ENCODE measurements at regions of chr12 and their contacts with region 1.

Region 1: DNA sequence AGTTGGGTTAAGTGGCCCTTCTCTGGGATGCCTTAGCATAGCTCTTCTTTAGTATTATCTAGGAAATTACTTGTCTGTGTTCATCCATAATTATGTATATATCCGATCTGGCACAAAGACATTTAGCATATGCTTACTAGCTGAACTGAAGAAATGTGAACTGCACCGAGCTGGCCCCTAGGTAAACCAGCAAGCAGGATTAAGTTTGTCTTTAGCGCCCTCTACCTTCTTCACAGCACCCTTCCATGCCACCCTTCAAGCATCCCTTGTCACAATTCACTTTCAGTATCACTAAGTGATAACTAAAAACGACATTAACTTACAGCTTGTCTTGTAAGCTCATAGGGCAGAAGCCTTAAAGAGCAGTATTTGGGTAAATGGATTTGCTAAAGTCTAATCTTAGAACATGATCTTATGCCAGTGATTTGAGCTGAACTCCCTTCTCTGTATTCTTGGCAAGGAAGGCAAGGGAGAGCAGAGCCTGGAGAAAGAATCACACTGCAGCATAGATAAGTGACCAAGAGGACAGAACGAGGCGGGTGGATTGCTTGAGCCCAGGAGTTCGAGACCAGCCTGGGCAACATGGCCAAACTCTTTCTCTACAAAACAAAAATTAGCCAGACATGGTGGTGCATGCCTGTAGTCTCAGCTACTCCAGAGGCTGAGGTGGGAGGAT is 2.6 kb upstream of the HAL start:
- DNase-seq: peak; percentile 73
- ATAC-seq: peak; percentile 93
- H3K4me3 ChIP-seq: no peak overlapping the region
- H3K4me3 Mint-ChIP-seq: no peak overlapping the region
- H3K27ac ChIP-seq: peak overlapping the region; percentile 6 to 17
- H3K27ac Mint-ChIP-seq: peak overlapping the region; percentile 35
- H3K4me1 ChIP-seq: peaks cover 0 to 5% of the 10 kb centered on the region in 2 donors
- H3K4me1 Mint-ChIP-seq: peaks cover 8% of the 10 kb centered on the region
- H3K27me3 ChIP-seq: no peaks in the 10 kb centered on the region
- H3K27me3 Mint-ChIP-seq: no peaks in the 10 kb centered on the region
- CTCF ChIP-seq: peak; percentile 71

Region 2: DNA sequence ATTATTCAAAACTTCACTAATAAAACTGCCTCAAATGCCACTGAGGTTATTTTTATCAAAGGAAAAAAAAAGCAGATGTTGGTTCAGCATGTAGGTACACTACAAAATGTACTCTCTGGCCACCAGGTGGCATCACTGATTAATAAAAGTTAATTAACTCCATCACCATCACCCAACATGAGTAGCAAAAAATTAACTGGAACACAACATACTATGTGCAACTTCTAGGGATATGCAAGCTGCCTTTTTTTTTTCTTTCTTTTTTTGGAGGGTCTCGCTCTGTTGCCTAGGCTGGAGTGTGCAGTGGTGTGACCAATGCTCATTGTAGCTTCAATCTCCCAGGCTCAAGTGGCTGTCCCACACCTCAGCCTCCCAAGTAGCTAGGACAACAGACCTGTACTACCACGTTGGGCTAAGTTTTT is 881.6 kb before region 1 on chr12:
- CTCF ChIA-PET with region 1: no interaction called
- POLR2A ChIA-PET with region 1: no interaction called
- intact Hi-C with region 1: loop called (anchors 5 kb)
- DNase-seq: peak; percentile 79
- ATAC-seq: peak; percentile 76
- H3K4me3 ChIP-seq: no peak overlapping the region
- H3K4me3 Mint-ChIP-seq: no peak overlapping the region
- H3K27ac ChIP-seq: no peak overlapping the region
- H3K27ac Mint-ChIP-seq: no peak overlapping the region
- H3K4me1 ChIP-seq: no peaks in the 10 kb centered on the region
- H3K4me1 Mint-ChIP-seq: no peaks in the 10 kb centered on the region
- H3K27me3 ChIP-seq: no peaks in the 10 kb centered on the region
- H3K27me3 Mint-ChIP-seq: no peaks in the 10 kb centered on the region
- CTCF ChIP-seq: peak; percentile 81

Region 3: GRCh38 chr12:95851606-95852005 is 147.1 kb before region 1 on chr12:
- CTCF ChIA-PET with region 1: no interaction called
- POLR2A ChIA-PET with region 1: no interaction called
- intact Hi-C with region 1: no loop called
- DNase-seq: no peak
- ATAC-seq: no peak
- H3K4me3 ChIP-seq: no peak overlapping the region
- H3K4me3 Mint-ChIP-seq: no peak overlapping the region
- H3K27ac ChIP-seq: no peak overlapping the region
- H3K27ac Mint-ChIP-seq: no peak overlapping the region
- H3K4me1 ChIP-seq: no peaks in the 10 kb centered on the region
- H3K4me1 Mint-ChIP-seq: no peaks in the 10 kb centered on the region
- H3K27me3 ChIP-seq: peaks cover 0 to 11% (median 9%) of the 10 kb centered on the region in 4 experiments
- H3K27me3 Mint-ChIP-seq: peaks cover 20% of the 10 kb centered on the region
- CTCF ChIP-seq: no peak

Region 4: GRCh38 chr12:95918194-95918993 is 80.4 kb before region 1 on chr12:
- CTCF ChIA-PET with region 1: interaction called, 112 read pairs
- POLR2A ChIA-PET with region 1: interaction called, 4 read pairs
- intact Hi-C with region 1: loop called (anchors 1 kb)
- DNase-seq: peak; percentile 70
- ATAC-seq: peak; percentile 90
- H3K4me3 ChIP-seq: no peak overlapping the region
- H3K4me3 Mint-ChIP-seq: no peak overlapping the region
- H3K27ac ChIP-seq: no peak overlapping the region
- H3K27ac Mint-ChIP-seq: no peak overlapping the region
- H3K4me1 ChIP-seq: peaks cover 4% of the 10 kb centered on the region in 2 donors
- H3K4me1 Mint-ChIP-seq: no peaks in the 10 kb centered on the region
- H3K27me3 ChIP-seq: peaks cover 0 to 2% (median 0%) of the 10 kb centered on the region in 4 experiments
- H3K27me3 Mint-ChIP-seq: peaks cover 3% of the 10 kb centered on the region
- CTCF ChIP-seq: peak; percentile 88

Region 5: DNA sequence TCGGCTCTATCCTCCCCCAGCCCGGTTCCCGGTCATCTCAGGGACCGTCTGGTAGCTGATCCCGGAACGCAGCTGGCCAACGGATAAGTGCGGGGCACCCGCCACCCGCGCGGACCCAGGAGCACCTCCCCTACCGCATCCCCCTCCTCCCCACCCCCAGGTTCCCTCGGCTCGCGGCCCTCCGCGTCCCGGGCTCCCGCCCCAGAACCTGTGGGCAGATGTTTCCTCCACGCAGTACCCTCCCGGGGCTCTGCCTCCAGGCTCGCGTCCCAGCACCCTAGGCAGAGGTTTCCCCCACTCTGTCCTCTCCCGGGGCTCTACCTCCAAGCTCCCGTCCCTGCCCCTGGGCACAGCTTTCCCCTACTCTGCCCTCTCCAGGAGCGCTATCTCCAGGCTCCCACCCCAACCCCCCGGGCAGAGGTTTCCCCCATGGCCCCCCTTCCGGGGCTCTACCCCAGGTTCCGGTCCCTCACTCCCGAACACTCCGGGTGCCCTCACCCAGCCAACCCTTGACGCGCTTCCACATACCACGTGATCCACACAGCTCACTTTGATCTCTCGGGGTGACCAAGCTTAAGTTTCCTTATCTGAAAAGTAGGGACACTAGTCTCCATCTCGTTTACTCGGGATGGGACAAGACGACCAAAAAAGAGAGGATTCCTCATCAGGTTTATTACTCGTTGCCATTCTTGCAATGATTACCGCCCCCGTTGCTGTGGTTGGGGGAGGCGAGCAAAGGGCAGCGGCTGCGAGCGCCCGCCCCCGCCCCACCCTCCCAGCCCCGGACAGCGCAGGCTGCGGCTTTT is 56.0 kb before region 1 on chr12 and contains the start of gene CCDC38:
- CTCF ChIA-PET with region 1: interaction called, 15 read pairs
- POLR2A ChIA-PET with region 1: no interaction called
- intact Hi-C with region 1: loop called (anchors 2 kb)
- DNase-seq: peak; percentile 85
- ATAC-seq: peak; percentile 88
- H3K4me3 ChIP-seq: peak within 1 kb of the TSS; percentile 68 to 94 (median 89)
- H3K4me3 Mint-ChIP-seq: peak within 1 kb of the TSS; percentile 98
- H3K27ac ChIP-seq: peak within 1 kb of the TSS; percentile 71 to 87
- H3K27ac Mint-ChIP-seq: peak within 1 kb of the TSS; percentile 92
- H3K4me1 ChIP-seq: peaks cover 9 to 11% of the 10 kb centered on the region in 2 donors
- H3K4me1 Mint-ChIP-seq: peaks cover 10% of the 10 kb centered on the region
- H3K27me3 ChIP-seq: no peaks in the 10 kb centered on the region
- H3K27me3 Mint-ChIP-seq: no peaks in the 10 kb centered on the region
- CTCF ChIP-seq: no peak
- total RNA-seq, gene CCDC38: 1.00 and 1.3 TPM in 2 replicates

Region 6: GRCh38 chr12:96020314-96021003 is 21.7 kb after region 1 on chr12:
- CTCF ChIA-PET with region 1: interaction called, 8 read pairs
- POLR2A ChIA-PET with region 1: interaction called, 4 read pairs
- intact Hi-C with region 1: loop called (anchors 2 kb)
- DNase-seq: peak; percentile 77
- ATAC-seq: peak; percentile 95
- H3K4me3 ChIP-seq: peak overlapping the region in 4 of 5 experiments; percentile 6 to 28 (median 20)
- H3K4me3 Mint-ChIP-seq: peak overlapping the region; percentile 62
- H3K27ac ChIP-seq: peak overlapping the region; percentile 62 to 79
- H3K27ac Mint-ChIP-seq: peak overlapping the region; percentile 89
- H3K4me1 ChIP-seq: peaks cover 28 to 34% of the 10 kb centered on the region in 2 donors
- H3K4me1 Mint-ChIP-seq: peaks cover 30% of the 10 kb centered on the region
- H3K27me3 ChIP-seq: no peaks in the 10 kb centered on the region
- H3K27me3 Mint-ChIP-seq: no peaks in the 10 kb centered on the region
- CTCF ChIP-seq: no peak

Region 7: DNA sequence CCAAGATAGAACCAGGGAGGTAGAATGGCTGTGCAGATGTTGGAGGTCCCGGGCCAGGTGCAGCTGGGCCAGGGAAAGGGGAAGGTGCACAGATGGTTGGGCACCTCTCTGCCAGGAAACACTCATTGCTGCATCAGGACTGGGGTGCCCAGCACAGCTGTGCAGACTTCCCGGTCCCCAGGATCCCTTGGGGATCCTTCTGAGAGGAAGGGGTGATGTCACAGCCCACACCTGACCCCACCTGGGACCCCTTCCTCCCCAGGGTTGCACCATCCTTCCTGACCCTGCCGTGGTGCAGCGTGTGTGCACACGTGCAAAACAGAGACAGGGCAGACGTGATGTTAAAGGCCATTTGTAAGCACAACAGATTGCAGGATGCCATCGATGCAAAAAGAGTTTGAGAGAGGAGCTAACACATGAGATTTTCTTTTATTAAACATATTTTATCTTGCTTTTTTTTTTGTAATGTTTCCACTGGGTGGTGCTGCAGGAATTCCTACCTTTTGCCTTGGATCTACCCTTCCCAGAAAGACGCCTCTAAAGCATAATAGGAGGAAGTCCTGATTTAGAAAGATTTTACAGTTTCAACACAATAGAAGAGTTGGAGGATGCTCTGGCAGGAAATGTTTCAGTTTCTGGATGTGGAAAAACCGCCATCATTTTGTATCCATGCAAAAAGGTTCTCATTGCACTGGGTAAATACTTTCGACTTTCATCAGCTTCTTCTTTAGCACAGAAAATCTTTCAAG is 210.2 kb after region 1 on chr12:
- CTCF ChIA-PET with region 1: interaction called, 12 read pairs
- POLR2A ChIA-PET with region 1: no interaction called
- intact Hi-C with region 1: no loop called
- DNase-seq: peak; percentile 81
- ATAC-seq: peak; percentile 87
- H3K4me3 ChIP-seq: peak overlapping the region in 1 of 5 experiments; percentile 34
- H3K4me3 Mint-ChIP-seq: peak overlapping the region; percentile 81
- H3K27ac ChIP-seq: peak overlapping the region; percentile 46 to 68
- H3K27ac Mint-ChIP-seq: peak overlapping the region; percentile 90
- H3K4me1 ChIP-seq: peaks cover 95 to 98% of the 10 kb centered on the region in 2 donors
- H3K4me1 Mint-ChIP-seq: peaks cover 91% of the 10 kb centered on the region
- H3K27me3 ChIP-seq: no peaks in the 10 kb centered on the region
- H3K27me3 Mint-ChIP-seq: no peaks in the 10 kb centered on the region
- CTCF ChIP-seq: no peak

Measured in B cell (primary cell).